Activated CD8-positive, alpha-beta T cell treated with anti-CD3 and anti-CD28 coated beads, Interleukin-2, amount 10 ng/mL, durations not matched to agents 7 days and 5 days (primary cell): ENCODE measurements at regions of chr15 and their contacts with region 1.

Region 1: DNA sequence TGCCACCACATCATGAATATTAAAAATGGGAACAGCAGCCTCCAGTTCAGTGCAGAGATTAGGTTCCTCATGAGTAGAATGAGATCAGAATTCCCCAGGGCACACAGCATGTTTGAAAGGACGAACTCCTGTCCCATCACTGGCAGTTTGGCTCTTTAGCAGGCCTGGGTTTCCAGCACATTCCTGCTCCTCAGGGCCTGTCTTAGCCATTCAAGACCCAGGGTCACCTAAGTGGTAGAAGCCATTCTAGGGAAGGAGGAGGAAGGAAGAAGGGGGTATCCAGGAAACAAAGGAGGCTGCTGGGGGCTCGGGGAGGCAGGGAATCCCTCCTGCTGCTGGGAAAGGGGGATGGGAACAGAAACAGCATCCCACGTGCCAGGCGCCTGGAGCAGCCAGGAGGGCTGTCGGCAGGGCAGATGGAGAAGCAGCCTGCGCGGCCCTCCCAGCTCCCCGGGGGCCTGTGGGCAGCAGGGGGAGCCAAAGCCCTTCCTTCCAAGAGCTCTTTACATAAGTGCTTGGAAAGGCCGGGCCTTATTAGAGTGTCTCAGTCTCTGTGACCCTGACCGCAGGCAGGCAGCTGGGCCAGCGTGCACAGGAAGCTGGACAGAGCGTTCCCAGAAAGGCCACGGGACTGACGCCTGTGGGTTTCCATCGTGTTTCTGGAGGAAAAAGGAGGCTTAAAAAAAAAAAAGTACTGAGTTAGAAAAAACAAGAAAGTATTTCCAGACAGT is 24.7 kb downstream of the LOXL1 start:
- DNase-seq: peak; percentile 88
- ATAC-seq: peak; percentile 94
- H3K4me3 Mint-ChIP-seq: peak overlapping the region; percentile 48
- H3K27ac Mint-ChIP-seq: peak overlapping the region; percentile 89
- H3K4me1 Mint-ChIP-seq: peaks cover 22% of the 10 kb centered on the region
- H3K27me3 Mint-ChIP-seq: no peaks in the 10 kb centered on the region

Region 2: GRCh38 chr15:73832657-73833056 is 118.3 kb before region 1 on chr15:
- CTCF ChIA-PET with region 1: no interaction called
- POLR2A ChIA-PET with region 1: no interaction called
- DNase-seq: no peak
- ATAC-seq: no peak
- H3K4me3 Mint-ChIP-seq: no peak overlapping the region
- H3K27ac Mint-ChIP-seq: no peak overlapping the region
- H3K4me1 Mint-ChIP-seq: no peaks in the 10 kb centered on the region
- H3K27me3 Mint-ChIP-seq: peaks cover 14% of the 10 kb centered on the region

Region 3: GRCh38 chr15:73936181-73936580 is 14.8 kb before region 1 on chr15:
- CTCF ChIA-PET with region 1: interaction called, 16 read pairs
- POLR2A ChIA-PET with region 1: no interaction called
- DNase-seq: no peak
- ATAC-seq: no peak
- H3K4me3 Mint-ChIP-seq: no peak overlapping the region
- H3K27ac Mint-ChIP-seq: no peak overlapping the region
- H3K4me1 Mint-ChIP-seq: peaks cover 11% of the 10 kb centered on the region
- H3K27me3 Mint-ChIP-seq: no peaks in the 10 kb centered on the region

Region 4: GRCh38 chr15:73991726-73992593 is 41.0 kb after region 1 on chr15 and contains the start of gene STOML1:
- CTCF ChIA-PET with region 1: interaction called, 12 read pairs
- POLR2A ChIA-PET with region 1: no interaction called
- DNase-seq: peak; percentile 94
- ATAC-seq: peak; percentile 79
- H3K4me3 Mint-ChIP-seq: peak within 1 kb of the TSS; percentile 81
- H3K27ac Mint-ChIP-seq: peak within 1 kb of the TSS; percentile 72
- H3K4me1 Mint-ChIP-seq: peaks cover 52% of the 10 kb centered on the region
- H3K27me3 Mint-ChIP-seq: no peaks in the 10 kb centered on the region
- total RNA-seq, gene STOML1: 10.8 to 10.9 TPM